Naive thymus-derived CD4-positive, alpha-beta T cell (primary cell): ENCODE measurements at regions of chr19 and their contacts with region 1.

Region 1: DNA sequence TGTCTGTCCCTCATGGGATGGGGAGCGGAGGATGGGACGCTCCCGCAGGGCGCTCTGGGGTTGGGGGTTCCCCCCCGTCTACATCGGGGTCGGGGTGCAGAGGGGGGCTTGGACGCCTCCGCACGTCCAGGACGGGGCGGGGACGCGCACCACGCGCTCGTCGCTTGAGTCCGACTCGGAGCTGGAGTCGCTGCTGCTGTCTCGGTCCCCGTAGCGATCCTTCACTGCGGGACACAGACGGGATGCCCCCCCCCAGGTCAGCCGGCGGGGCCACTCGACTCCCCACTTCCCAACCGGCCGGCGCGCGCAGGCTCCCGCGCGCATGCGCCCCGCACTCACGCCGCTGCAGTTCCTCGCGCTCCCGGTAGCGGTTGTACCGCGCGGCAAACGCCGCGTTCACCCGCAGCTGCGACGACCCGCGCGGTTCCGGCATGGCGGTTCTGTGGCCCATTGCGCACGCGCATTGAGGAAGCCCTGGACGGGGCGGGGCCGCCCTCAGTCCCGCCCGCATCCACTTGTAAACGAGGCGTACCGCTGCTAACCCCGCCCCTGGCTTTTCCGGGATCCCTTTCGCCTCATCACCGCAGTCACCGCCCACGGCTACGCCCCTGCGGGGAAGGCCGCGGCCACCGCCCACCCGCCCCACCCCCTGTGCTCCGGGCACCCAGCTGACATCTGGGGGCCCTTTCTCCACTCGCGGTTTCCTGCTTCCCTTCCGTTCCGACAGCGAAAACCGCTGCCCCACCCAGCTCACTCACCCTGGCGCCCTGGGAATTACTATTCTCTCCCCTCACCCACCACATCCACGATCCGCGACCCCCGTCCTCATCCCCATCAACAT is at the start of gene KRI1:
- DNase-seq: peak; percentile 97 to 100 (median 99)
- ATAC-seq: peak; percentile 75
- H3K4me3 ChIP-seq: peak within 1 kb of the TSS; percentile 84
- H3K4me3 Mint-ChIP-seq: peak within 1 kb of the TSS; percentile 92 to 100 (median 97)
- H3K27ac ChIP-seq: peak within 1 kb of the TSS; percentile 92
- H3K27ac Mint-ChIP-seq: peak within 1 kb of the TSS; percentile 94 to 99 (median 96)
- H3K4me1 ChIP-seq: peaks cover 26 to 28% of the 10 kb centered on the region in 2 donors
- H3K4me1 Mint-ChIP-seq: peaks cover 28 to 56% (median 45%) of the 10 kb centered on the region in 7 donors
- H3K27me3 ChIP-seq: no peaks in the 10 kb centered on the region
- H3K27me3 Mint-ChIP-seq: peaks cover 0 to 5% (median 0%) of the 10 kb centered on the region in 5 donors
- total RNA-seq, gene KRI1: 48.4 to 84.1 (median 60.4) TPM

Region 2: GRCh38 chr19:10403137-10404021 is 162.4 kb before region 1 on chr19 and contains the start of gene CDC37:
- CTCF ChIA-PET with region 1: no interaction called
- POLR2A ChIA-PET with region 1: no interaction called
- intact Hi-C with region 1: loop called (anchors 1 kb)
- DNase-seq: peak; percentile 95 to 99 (median 97)
- ATAC-seq: peak; percentile 88
- H3K4me3 ChIP-seq: peak within 1 kb of the TSS; percentile 87
- H3K4me3 Mint-ChIP-seq: peak within 1 kb of the TSS; percentile 90 to 97 (median 95)
- H3K27ac ChIP-seq: peak within 1 kb of the TSS; percentile 97
- H3K27ac Mint-ChIP-seq: peak within 1 kb of the TSS; percentile 80 to 97 (median 95)
- H3K4me1 ChIP-seq: peaks cover 55 to 59% of the 10 kb centered on the region in 2 donors
- H3K4me1 Mint-ChIP-seq: peaks cover 40 to 85% (median 59%) of the 10 kb centered on the region in 7 donors
- H3K27me3 ChIP-seq: no peaks in the 10 kb centered on the region
- H3K27me3 Mint-ChIP-seq: peaks cover 0 to 3% (median 0%) of the 10 kb centered on the region in 5 donors
- total RNA-seq, gene CDC37: 169 to 229 (median 180) TPM

Region 3: DNA sequence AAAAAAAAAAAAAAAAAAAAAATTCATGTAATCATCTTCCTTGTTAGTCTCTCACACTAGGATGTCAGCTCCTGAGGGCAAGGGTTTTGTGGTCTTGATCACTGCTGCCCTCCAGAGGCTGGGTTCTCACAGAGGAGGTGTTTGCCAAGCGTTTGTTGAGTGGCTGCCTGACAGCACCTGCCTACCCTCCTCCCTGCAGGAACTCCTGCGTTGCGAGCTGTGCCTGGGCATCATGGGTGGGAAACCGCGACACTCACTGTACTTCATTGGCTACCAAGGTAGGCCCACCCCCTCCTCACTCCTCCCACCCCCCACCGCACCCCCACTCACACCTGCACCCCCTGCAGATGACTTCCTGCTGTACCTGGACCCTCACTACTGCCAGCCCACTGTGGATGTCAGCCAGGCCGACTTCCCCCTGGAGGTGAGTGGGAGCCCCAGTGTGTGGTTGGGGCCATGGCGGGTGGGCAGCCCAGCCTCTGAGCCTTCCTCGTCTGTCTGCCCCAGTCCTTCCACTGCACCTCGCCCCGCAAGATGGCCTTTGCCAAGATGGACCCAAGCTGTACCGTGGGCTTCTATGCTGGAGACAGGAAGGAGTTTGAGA is 14.0 kb before region 1 on chr19:
- CTCF ChIA-PET with region 1: interaction called, 6 read pairs
- POLR2A ChIA-PET with region 1: interaction called, 126 read pairs
- intact Hi-C with region 1: loop called (anchors 1 kb)
- DNase-seq: peak in 6 of 9 donors; percentile 23 to 42 (median 35)
- ATAC-seq: peak; percentile 24
- H3K4me3 ChIP-seq: no peak overlapping the region
- H3K4me3 Mint-ChIP-seq: peak overlapping the region in 2 of 10 donors; percentile 25 to 42
- H3K27ac ChIP-seq: peak overlapping the region; percentile 66
- H3K27ac Mint-ChIP-seq: peak overlapping the region; percentile 44 to 96 (median 76)
- H3K4me1 ChIP-seq: peaks cover 41 to 54% of the 10 kb centered on the region in 2 donors
- H3K4me1 Mint-ChIP-seq: peaks cover 22 to 63% (median 41%) of the 10 kb centered on the region in 7 donors
- H3K27me3 ChIP-seq: no peaks in the 10 kb centered on the region
- H3K27me3 Mint-ChIP-seq: no peaks in the 10 kb centered on the region

Region 4: GRCh38 chr19:10717356-10718204 is 151.8 kb after region 1 on chr19 and contains the start of gene DNM2:
- CTCF ChIA-PET with region 1: interaction called, 3 read pairs
- POLR2A ChIA-PET with region 1: interaction called, 3 read pairs
- intact Hi-C with region 1: loop called in 1 of 2 experiments (anchors 1 kb)
- DNase-seq: peak; percentile 90 to 100 (median 99)
- ATAC-seq: peak; percentile 90
- H3K4me3 ChIP-seq: peak within 1 kb of the TSS; percentile 77
- H3K4me3 Mint-ChIP-seq: peak within 1 kb of the TSS; percentile 91 to 98 (median 96)
- H3K27ac ChIP-seq: peak within 1 kb of the TSS; percentile 87
- H3K27ac Mint-ChIP-seq: peak within 1 kb of the TSS; percentile 85 to 96 (median 93)
- H3K4me1 ChIP-seq: peaks cover 23 to 34% of the 10 kb centered on the region in 2 donors
- H3K4me1 Mint-ChIP-seq: peaks cover 19 to 48% (median 35%) of the 10 kb centered on the region in 7 donors
- H3K27me3 ChIP-seq: no peaks in the 10 kb centered on the region
- H3K27me3 Mint-ChIP-seq: no peaks in the 10 kb centered on the region
- total RNA-seq, gene DNM2: 238 to 340 (median 269) TPM

Region 5: DNA sequence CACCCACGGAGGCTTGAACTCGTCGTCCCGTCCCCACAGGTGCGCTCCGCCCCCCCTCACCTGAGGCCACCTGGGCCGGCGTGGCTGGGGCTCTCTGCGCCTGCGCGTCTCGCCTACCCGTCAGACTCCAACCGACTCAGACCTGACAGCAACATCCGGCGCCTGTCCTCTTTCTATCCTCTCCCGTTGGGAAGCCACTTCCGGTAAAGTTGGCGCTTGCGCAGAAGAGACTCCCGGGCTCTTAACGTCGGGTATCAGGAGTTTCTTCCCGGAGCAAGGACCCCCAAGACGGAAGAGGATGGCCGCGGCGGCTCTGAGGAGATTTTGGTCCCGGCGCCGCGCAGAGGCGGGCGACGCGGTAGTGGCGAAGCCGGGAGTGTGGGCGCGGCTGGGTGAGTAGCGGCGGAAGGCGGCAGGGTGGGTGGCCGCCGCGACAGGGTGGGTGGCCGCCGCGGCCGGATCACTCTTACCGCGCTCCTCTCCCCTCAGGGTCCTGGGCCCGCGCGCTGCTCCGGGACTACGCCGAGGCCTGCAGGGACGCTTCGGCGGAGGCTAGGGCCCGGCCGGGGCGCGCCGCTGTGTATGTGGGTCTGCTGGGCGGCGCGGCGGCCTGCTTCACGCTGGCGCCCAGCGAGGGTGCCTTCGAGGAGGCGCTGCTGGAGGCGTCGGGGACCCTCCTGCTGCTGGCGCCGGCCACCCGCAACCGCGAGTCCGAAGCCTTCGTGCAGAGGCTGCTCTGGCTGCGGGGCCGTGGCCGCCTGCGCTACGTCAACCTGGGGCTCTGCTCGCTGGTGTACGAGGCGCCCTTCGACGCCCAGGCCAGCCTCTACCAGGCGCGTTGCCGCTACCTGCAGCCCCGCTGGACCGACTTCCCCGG is 363.0 kb after region 1 on chr19 and contains the starts of genes TIMM29 and YIPF2:
- CTCF ChIA-PET with region 1: no interaction called
- POLR2A ChIA-PET with region 1: no interaction called
- intact Hi-C with region 1: loop called in 1 of 2 experiments (anchors 5 kb)
- DNase-seq: peak; percentile 76 to 92 (median 88)
- ATAC-seq: peak; percentile 91
- H3K4me3 ChIP-seq: peak within 1 kb of the TSS; percentile 89
- H3K4me3 Mint-ChIP-seq: peak within 1 kb of the TSS; percentile 84 to 96 (median 92)
- H3K27ac ChIP-seq: peak within 1 kb of the TSS; percentile 77
- H3K27ac Mint-ChIP-seq: peak within 1 kb of the TSS; percentile 66 to 93 (median 90)
- H3K4me1 ChIP-seq: peaks cover 14 to 16% of the 10 kb centered on the region in 2 donors
- H3K4me1 Mint-ChIP-seq: peaks cover 12 to 33% (median 26%) of the 10 kb centered on the region in 7 donors
- H3K27me3 ChIP-seq: no peaks in the 10 kb centered on the region
- H3K27me3 Mint-ChIP-seq: no peaks in the 10 kb centered on the region
- total RNA-seq, gene TIMM29: 15.8 to 33.4 (median 24.7) TPM
- total RNA-seq, gene YIPF2: 20.5 to 27.9 (median 26.2) TPM

Region 6: GRCh38 chr19:11100049-11100448 is 534.3 kb after region 1 on chr19:
- CTCF ChIA-PET with region 1: no interaction called
- POLR2A ChIA-PET with region 1: no interaction called
- intact Hi-C with region 1: no loop called
- DNase-seq: no peak
- ATAC-seq: no peak
- H3K4me3 ChIP-seq: no peak overlapping the region
- H3K4me3 Mint-ChIP-seq: no peak overlapping the region
- H3K27ac ChIP-seq: no peak overlapping the region
- H3K27ac Mint-ChIP-seq: peak overlapping the region in 2 of 9 donors; percentile 67 to 80
- H3K4me1 ChIP-seq: peaks cover 16 to 21% of the 10 kb centered on the region in 2 donors
- H3K4me1 Mint-ChIP-seq: peaks cover 18 to 43% (median 21%) of the 10 kb centered on the region in 7 donors
- H3K27me3 ChIP-seq: no peaks in the 10 kb centered on the region
- H3K27me3 Mint-ChIP-seq: no peaks in the 10 kb centered on the region